Ovary (tissue), 10 donors: ENCODE measurements at regions of chr14 and their contacts with region 1.

Region 1: DNA sequence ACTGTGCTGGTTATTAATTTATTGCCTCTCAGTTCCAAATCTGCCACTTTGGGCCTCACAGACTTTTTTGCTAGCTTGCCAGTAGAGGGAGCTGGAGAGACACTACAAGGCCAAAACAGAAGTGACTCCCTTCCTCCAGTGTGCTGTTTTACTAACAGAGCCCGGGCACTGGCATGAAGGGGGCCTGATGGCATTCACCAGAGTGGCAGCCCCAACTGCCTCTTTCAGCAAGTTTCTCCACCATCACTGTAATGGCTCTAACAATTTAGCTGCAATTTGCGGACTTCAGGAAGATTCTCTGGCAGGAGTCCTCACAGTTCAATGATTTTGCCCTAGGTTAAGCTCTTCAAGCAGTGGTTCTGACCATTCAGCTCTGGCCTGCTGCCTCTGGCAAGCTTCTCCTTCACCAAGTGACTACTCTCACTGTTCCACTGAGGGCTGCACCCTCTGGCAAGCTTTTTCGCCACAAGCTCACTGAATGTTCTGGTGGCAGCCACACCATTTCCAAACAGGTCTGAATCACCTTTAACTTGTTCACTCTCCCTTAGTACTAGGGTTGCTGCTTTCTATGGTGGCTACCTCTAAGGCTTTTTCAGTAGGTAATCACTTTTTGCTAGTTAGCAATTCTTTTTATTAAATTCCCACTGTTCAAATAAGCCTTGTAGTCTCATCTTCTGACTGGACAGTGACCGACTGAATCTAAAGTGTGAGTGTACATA is 104.9 kb downstream of the ZC3H14 start:
- DNase-seq: peak; percentile 37 to 57 (median 49)
- H3K4me3 ChIP-seq: no peak overlapping the region
- H3K27ac ChIP-seq: no peak overlapping the region
- H3K4me1 ChIP-seq: no peaks in the 10 kb centered on the region
- H3K27me3 ChIP-seq: no peaks in the 10 kb centered on the region
- CTCF ChIP-seq: peak; percentile 68 to 72 (median 70)
- EP300 ChIP-seq: no peak
- POLR2A ChIP-seq: no peak

Region 2: GRCh38 chr14:88706425-88706824 is 38.7 kb after region 1 on chr14:
- intact Hi-C with region 1: no loop called
- DNase-seq: no peak
- H3K4me3 ChIP-seq: no peak overlapping the region
- H3K27ac ChIP-seq: no peak overlapping the region
- H3K4me1 ChIP-seq: no peaks in the 10 kb centered on the region
- H3K27me3 ChIP-seq: no peaks in the 10 kb centered on the region
- CTCF ChIP-seq: no peak
- EP300 ChIP-seq: no peak
- POLR2A ChIP-seq: no peak

Region 3: GRCh38 chr14:88868558-88869159 is 200.9 kb after region 1 on chr14:
- intact Hi-C with region 1: loop called in 1 of 4 experiments (anchors 5 kb)
- DNase-seq: no peak
- H3K4me3 ChIP-seq: no peak overlapping the region
- H3K27ac ChIP-seq: no peak overlapping the region
- H3K4me1 ChIP-seq: peaks cover 2% of the 10 kb centered on the region
- H3K27me3 ChIP-seq: no peaks in the 10 kb centered on the region
- CTCF ChIP-seq: peak; percentile 5 to 51 (median 47)
- EP300 ChIP-seq: no peak
- POLR2A ChIP-seq: no peak